ENCODE measurements at regions of chr1 and their contacts with region 1.

Region 1: GRCh38 chr1:224623743-224624333 is 7.7 kb downstream of the CNIH3 start:
- DNase-seq: peak; percentile 89 to 93 (median 91)
- H3K4me3 ChIP-seq: peak overlapping the region in 1 of 2 donors; percentile 16
- H3K4me3 Mint-ChIP-seq: peak overlapping the region; percentile 63 to 91 (median 80)
- H3K27ac ChIP-seq: peak overlapping the region; percentile 59
- H3K27ac Mint-ChIP-seq: peak overlapping the region; percentile 88 to 99 (median 98)
- H3K4me1 ChIP-seq: peaks cover 36% of the 10 kb centered on the region
- H3K4me1 Mint-ChIP-seq: peaks cover 27 to 57% (median 37%) of the 10 kb centered on the region in 4 donors
- H3K27me3 ChIP-seq: peaks cover 5% of the 10 kb centered on the region
- H3K27me3 Mint-ChIP-seq: peaks cover 15 to 26% of the 10 kb centered on the region in 2 donors

Region 2: DNA sequence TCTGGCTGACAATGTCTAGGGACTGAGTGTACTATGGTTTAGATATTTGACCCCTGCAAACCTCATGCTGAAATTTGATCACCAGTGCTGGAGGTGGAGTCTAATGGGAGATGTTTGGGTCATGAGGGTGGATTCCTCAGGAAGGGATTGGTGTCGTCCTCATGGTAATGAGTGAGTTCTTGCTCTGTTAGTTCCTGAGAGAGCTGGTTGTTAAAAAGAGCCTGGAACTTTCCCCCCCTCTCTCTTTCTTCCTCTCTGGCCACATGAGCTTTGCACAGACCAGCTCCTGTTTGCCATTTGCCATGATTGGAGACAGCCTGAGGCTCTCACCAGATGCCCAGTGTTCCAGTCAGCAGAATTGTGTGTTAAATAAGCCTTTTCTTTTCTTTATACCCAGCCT is 44.3 kb before region 1 on chr1:
- CTCF ChIA-PET with region 1: no interaction called
- POLR2A ChIA-PET with region 1: no interaction called
- intact Hi-C with region 1: loop called (anchors 5 kb)
- DNase-seq: no peak
- H3K4me3 ChIP-seq: no peak overlapping the region
- H3K4me3 Mint-ChIP-seq: no peak overlapping the region
- H3K27ac ChIP-seq: no peak overlapping the region
- H3K27ac Mint-ChIP-seq: no peak overlapping the region
- H3K4me1 ChIP-seq: no peaks in the 10 kb centered on the region
- H3K4me1 Mint-ChIP-seq: no peaks in the 10 kb centered on the region
- H3K27me3 ChIP-seq: peaks cover 3% of the 10 kb centered on the region
- H3K27me3 Mint-ChIP-seq: peaks cover 6 to 13% of the 10 kb centered on the region in 2 donors

Region 3: DNA sequence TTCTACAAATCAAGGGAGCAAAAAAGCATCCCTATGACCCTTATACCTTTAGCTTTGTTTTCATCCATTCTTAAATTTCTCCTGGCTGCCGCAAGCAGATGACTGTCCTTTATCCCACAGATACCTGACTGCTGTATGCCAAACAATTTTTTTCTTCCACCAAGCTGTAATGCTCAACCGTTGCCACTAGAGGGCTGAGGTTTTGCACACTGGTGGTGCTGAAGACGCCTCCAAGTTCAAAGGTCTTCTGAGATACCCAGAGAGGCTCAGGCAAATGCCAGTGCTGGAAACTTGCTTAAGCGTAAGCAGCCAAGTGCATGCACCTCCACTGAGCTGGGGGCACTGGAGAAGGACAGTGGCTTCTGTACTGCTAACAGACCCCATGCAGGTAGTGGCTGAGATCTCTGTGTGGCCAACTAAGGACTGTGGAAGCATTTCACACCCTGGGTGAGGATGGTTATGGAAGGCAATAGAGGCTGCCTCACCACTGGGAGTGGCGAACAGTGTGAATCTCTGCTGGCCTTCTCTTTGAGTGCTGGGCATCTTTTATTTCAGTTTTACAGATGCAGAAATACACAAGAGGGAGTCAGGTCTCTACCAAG is 20.8 kb after region 1 on chr1:
- CTCF ChIA-PET with region 1: interaction called, 13 read pairs
- POLR2A ChIA-PET with region 1: no interaction called
- intact Hi-C with region 1: no loop called
- DNase-seq: peak in 4 of 5 donors; percentile 52 to 65 (median 60)
- H3K4me3 ChIP-seq: no peak overlapping the region
- H3K4me3 Mint-ChIP-seq: no peak overlapping the region
- H3K27ac ChIP-seq: no peak overlapping the region
- H3K27ac Mint-ChIP-seq: no peak overlapping the region
- H3K4me1 ChIP-seq: no peaks in the 10 kb centered on the region
- H3K4me1 Mint-ChIP-seq: peaks cover 0 to 2% (median 0%) of the 10 kb centered on the region in 4 donors
- H3K27me3 ChIP-seq: no peaks in the 10 kb centered on the region
- H3K27me3 Mint-ChIP-seq: peaks cover 2 to 9% of the 10 kb centered on the region in 2 donors

Measured in CD4-positive, alpha-beta memory T cell (primary cell).